GM10248 (cell line): ENCODE measurements at regions of chr21 and their contacts with region 1.

Region 1: GRCh38 chr21:17925000-17925610 is 105.9 kb upstream of the C21orf91 start:
- DNase-seq: peak; percentile 69
- CTCF ChIP-seq: peak; percentile 88

Region 2: GRCh38 chr21:17679002-17679600 is 246.0 kb before region 1 on chr21:
- CTCF ChIA-PET with region 1: interaction called, 129 read pairs
- POLR2A ChIA-PET with region 1: no interaction called
- DNase-seq: peak; percentile 69
- CTCF ChIP-seq: peak; percentile 70

Region 3: DNA sequence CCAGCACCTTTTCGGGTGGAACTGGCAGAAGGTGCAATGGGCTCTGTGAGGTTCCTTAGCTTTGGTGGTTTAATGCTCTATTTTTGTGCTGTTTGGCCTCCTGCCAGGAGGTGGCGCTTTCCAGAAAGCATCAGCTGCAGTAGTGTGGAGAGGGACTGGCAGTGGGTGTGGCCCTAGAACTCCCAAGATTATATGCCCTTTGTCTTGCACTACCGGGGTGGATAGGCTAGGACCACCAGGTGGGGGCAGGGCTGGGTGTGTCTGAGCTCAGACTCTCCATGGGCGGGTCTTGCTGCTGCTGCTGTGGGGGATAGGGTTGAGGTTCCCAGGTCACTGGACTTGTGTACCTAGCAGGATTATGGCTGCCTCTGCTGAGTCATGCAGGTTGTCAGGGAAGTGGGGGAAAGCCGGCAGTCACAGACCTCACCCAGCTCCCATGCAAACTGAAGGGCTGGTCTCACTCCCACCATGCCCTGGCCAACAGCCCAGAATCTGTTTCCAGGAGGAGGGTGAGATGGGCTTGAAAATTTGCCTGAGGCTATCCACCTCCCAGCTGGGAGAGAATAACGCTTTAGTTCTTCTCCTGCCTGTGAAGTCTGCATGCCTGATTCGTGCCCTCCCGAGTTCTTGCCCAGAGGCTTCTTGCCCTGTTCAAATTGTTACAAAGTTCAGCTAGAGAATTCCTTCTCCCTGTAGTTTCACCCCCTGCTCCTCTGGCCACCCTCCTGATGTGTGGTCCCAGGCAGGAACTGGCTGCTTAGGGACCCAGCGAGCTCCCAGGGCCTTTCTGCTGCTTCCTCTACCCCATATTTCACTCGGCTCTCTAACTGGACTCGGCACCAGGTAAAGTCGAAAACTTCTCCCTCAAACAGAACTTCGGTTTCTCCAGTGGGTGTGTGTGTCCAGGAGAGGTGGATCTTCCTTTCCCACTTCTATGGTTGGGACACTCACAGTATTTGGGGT is 235.9 kb before region 1 on chr21:
- CTCF ChIA-PET with region 1: interaction called, 21 read pairs
- POLR2A ChIA-PET with region 1: no interaction called
- DNase-seq: no peak
- CTCF ChIP-seq: peak; percentile 13

Region 4: DNA sequence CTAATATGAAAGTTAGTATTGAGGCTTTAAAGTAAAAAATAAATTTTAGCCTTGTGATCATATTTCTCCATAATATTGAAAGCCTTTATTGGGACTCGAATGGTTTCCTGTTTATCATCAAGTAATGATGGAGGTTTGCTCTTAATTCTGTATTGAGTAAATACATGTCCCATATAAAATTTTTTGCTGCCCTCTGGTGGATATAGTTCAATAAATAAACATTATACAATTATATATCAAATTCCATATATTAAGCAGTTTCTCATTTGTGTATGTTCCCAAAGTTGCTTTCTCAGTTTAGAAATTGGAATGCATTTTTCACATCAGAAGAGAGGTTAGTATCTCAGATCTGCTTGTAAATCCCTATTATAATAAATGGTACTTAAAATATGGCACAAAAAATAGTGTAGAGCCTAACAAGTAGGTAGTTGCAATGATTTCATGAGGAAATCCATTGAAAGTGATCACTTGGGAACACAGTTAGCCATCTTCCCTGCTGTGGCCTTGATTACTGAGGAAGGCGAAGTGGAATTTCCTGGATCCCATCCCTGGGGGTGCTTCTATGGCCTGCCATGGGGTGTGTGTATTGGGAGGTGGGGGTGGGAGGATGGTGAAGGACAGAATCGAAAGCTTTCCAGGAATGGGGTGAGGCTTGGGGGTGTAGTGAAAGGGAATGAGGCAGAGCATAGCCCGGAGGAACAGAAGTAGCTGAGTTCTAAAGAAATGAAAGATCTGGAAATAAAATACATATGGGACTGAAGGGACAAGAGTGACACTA is 21.9 kb before region 1 on chr21:
- CTCF ChIA-PET with region 1: interaction called, 21 read pairs
- POLR2A ChIA-PET with region 1: no interaction called
- DNase-seq: peak; percentile 43
- CTCF ChIP-seq: no peak

Region 5: GRCh38 chr21:17911628-17912027 is 13.5 kb before region 1 on chr21:
- CTCF ChIA-PET with region 1: interaction called, 21 read pairs
- POLR2A ChIA-PET with region 1: no interaction called
- DNase-seq: no peak
- CTCF ChIP-seq: no peak

Region 6: DNA sequence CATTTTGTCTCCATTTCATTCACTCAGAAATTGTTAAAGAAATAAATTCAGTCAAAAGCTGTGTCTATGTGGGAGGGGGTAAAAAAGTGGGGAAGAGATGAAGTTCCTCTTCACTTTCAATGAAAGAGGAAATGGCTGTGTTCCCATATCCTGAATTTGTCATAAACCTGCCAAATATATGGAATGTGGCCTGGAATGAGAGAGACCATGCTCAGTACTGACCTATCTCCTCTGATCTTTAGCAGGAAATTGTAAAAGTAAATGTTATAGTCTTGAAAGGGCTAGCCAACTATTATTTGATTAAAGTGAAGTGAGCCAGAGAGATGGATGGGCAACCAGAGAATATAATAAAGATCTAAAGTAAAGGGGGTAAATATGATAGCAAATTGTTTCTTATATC is 24.3 kb after region 1 on chr21:
- CTCF ChIA-PET with region 1: interaction called, 11 read pairs
- POLR2A ChIA-PET with region 1: no interaction called
- DNase-seq: no peak
- CTCF ChIP-seq: no peak